Activated T-helper 1 cell treated with anti-CD3 and anti-CD28 coated beads, Interleukin-12 subunit alpha, Interleukin-12 subunit beta, Interleukin-2, Interleukin-4 antibody, amounts not matched to agents 30 ng/mL and 10 ng/mL and 1 ng/mL, durations not matched to agents 14 hours and 24 hours and 36 hours (primary cell): ENCODE measurements at regions of chrX and their contacts with region 1.

Region 1: GRCh38 chrX:373637-374471 is 12.9 kb downstream of the PPP2R3B start:
- DNase-seq: peak; percentile 29
- H3K4me3 Mint-ChIP-seq: peak overlapping the region; percentile 79
- H3K27ac Mint-ChIP-seq: no peak overlapping the region
- H3K4me1 Mint-ChIP-seq: peaks cover 24% of the 10 kb centered on the region
- H3K27me3 Mint-ChIP-seq: peaks cover 33% of the 10 kb centered on the region

Region 2: DNA sequence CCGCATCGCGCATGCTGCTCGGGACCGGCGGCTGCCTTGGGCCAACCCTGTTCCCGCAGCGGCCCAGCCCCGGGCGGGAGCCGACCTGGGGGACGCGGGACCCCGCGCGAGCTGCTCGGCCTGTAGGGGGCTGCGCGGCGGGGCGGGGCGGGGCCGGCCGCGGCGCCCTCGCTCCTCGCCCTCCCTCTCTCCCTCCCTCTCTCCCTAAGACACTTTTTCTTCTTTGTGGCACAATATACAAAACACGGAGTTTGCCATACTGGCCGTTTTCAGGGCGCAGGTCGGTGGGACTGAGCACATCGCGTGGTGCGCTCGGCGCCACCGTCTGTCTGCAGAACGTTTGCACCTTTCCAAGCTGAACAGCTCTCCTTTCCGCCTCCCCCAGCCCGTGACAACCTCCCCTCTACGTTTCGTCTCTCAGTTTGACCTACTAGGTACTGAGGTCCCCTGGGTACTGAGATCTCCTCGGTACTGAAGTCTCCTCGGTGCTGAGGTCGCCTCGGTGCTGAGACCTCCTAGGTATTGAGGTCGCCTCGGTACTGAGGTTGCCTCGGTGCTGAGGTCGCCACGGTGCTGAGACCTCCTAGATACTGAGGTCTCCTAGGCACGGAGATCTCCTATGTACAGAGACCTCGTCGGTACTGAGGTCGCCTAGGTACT is 353.8 kb before region 1 on chrX:
- intact Hi-C with region 1: no loop called
- DNase-seq: no peak
- H3K4me3 Mint-ChIP-seq: peak overlapping the region; percentile 92
- H3K27ac Mint-ChIP-seq: peak overlapping the region; percentile 84
- H3K4me1 Mint-ChIP-seq: peaks cover 5% of the 10 kb centered on the region
- H3K27me3 Mint-ChIP-seq: no peaks in the 10 kb centered on the region

Region 3: GRCh38 chrX:357693-358471 is 16.0 kb before region 1 on chrX:
- intact Hi-C with region 1: loop called (anchors 1 kb)
- DNase-seq: peak; percentile 32
- H3K4me3 Mint-ChIP-seq: peak overlapping the region; percentile 56
- H3K27ac Mint-ChIP-seq: peak overlapping the region; percentile 88
- H3K4me1 Mint-ChIP-seq: peaks cover 13% of the 10 kb centered on the region
- H3K27me3 Mint-ChIP-seq: no peaks in the 10 kb centered on the region